Activated B cell treated with CpG ODN at 0.5 μM for 24 hours (primary cell): ENCODE measurements at regions of chr2 and their contacts with region 1.

Region 1: DNA sequence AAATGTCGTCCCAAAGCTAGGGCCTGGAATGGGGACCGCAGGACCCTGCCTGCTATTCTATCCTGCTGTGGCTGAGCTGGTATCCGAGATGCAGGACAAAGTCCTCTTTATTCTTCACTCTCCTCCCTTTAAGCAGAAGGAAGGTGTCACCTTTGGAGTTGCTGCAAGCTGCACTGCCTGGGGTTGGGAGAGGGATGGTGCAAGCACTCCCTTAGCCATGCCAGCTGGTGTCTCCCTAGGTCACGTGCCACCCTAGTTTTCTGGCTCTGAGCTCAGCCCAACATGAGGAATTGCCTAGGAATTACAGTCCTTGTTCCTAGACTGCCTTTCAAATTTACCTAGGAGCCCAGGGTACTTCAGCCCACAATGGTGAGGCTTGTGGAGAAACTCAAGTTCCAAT is 21.4 kb upstream of the FAM228A start:
- DNase-seq: no peak
- ATAC-seq: no peak
- H3K4me3 Mint-ChIP-seq: no peak overlapping the region
- H3K27ac Mint-ChIP-seq: no peak overlapping the region
- H3K4me1 Mint-ChIP-seq: no peaks in the 10 kb centered on the region
- H3K27me3 Mint-ChIP-seq: no peaks in the 10 kb centered on the region
- CTCF ChIP-seq: no peak

Region 2: GRCh38 chr2:23639406-23639982 is 514.0 kb before region 1 on chr2:
- CTCF ChIA-PET with region 1: no interaction called
- POLR2A ChIA-PET with region 1: no interaction called
- intact Hi-C with region 1: no loop called
- DNase-seq: no peak
- ATAC-seq: no peak
- H3K4me3 Mint-ChIP-seq: no peak overlapping the region
- H3K27ac Mint-ChIP-seq: no peak overlapping the region
- H3K4me1 Mint-ChIP-seq: no peaks in the 10 kb centered on the region
- H3K27me3 Mint-ChIP-seq: no peaks in the 10 kb centered on the region
- CTCF ChIP-seq: no peak

Region 3: GRCh38 chr2:24015562-24016346 is 137.7 kb before region 1 on chr2:
- CTCF ChIA-PET with region 1: no interaction called
- POLR2A ChIA-PET with region 1: no interaction called
- intact Hi-C with region 1: loop called (anchors 10 kb)
- DNase-seq: no peak
- ATAC-seq: no peak
- H3K4me3 Mint-ChIP-seq: no peak overlapping the region
- H3K27ac Mint-ChIP-seq: no peak overlapping the region
- H3K4me1 Mint-ChIP-seq: no peaks in the 10 kb centered on the region
- H3K27me3 Mint-ChIP-seq: peaks cover 10% of the 10 kb centered on the region
- CTCF ChIP-seq: no peak

Region 4: GRCh38 chr2:24105816-24106215 is 47.7 kb before region 1 on chr2:
- CTCF ChIA-PET with region 1: no interaction called
- POLR2A ChIA-PET with region 1: no interaction called
- intact Hi-C with region 1: loop called (anchors 2 kb)
- DNase-seq: no peak
- ATAC-seq: no peak
- H3K4me3 Mint-ChIP-seq: no peak overlapping the region
- H3K27ac Mint-ChIP-seq: no peak overlapping the region
- H3K4me1 Mint-ChIP-seq: peaks cover 26% of the 10 kb centered on the region
- H3K27me3 Mint-ChIP-seq: no peaks in the 10 kb centered on the region
- CTCF ChIP-seq: no peak

Region 5: DNA sequence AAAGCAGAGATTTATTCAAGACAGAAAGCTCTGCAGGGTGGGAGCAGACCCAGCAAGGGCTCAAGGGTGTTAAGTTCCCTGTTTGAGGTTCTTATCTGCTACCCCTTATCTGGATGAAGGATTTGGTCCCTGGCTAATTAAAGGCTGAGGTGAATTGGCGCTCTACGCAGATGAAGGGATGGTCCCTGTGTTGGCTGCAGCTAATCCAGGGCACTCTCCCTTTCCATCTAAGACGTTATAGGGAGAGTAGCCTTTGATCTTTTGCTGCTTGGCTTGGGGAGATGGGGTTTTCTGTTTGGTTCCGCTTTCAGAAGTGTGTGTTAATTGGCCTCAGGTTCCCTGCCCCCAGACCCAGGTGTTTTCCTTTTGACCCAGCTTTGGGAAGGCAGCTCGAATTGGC is 38.4 kb after region 1 on chr2:
- CTCF ChIA-PET with region 1: no interaction called
- POLR2A ChIA-PET with region 1: no interaction called
- intact Hi-C with region 1: no loop called
- DNase-seq: no peak
- ATAC-seq: no peak
- H3K4me3 Mint-ChIP-seq: no peak overlapping the region
- H3K27ac Mint-ChIP-seq: no peak overlapping the region
- H3K4me1 Mint-ChIP-seq: no peaks in the 10 kb centered on the region
- H3K27me3 Mint-ChIP-seq: peaks cover 7% of the 10 kb centered on the region
- CTCF ChIP-seq: no peak